Astrocyte of the cerebellum (primary cell): ENCODE measurements at regions of chr17 and their contacts with region 1.

Region 1: GRCh38 chr17:38617011-38617867 is 11.5 kb upstream of the SRCIN1 start:
- DNase-seq: no peak
- H3K4me3 ChIP-seq: no peak overlapping the region
- CTCF ChIP-seq: no peak

Region 2: DNA sequence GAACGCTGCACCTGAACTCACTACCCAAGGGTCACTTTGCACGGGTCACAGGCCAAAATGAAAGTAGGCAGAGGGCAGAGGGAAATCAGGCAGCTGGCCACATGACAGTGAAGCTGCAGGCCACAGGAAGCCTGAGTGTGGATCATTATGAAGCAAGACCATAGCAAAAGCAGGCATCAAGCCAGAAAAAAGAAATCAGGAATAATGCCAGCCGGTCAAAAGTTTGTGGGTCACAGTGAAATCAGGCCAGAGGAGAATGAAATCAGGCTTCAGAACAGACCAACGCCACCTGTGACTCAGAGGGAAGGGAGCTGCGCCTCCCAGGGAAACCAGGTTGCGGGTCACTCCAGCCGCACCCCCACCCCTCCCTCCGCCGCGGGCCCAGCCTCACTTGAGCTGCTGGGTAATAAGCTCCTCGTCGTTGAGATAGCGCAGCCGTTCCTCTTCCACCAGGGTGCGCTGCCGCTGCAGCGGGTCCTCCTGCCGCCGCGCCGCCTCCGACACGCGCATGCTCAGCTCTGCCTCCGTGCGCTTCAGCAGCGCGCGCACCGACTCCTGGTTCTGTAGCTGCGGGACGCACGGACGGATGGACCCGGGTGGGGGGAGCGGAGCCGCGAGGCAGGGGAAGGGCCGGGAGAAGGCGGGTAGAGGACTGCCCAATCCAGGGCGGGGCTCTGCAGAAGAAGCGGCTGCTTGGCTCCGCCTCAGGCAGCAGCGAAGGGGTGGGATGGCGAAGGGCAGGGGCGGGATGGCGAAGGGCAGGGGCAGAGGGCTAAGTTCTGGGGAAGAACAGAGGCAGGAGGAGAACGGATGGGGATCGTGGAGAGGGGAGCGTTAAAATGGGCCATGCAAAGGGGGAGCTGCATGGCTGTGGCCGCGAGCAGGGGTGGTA is 59.2 kb before region 1 on chr17:
- in situ Hi-C with region 1: no loop called
- DNase-seq: peak; percentile 68
- H3K4me3 ChIP-seq: peak overlapping the region; percentile 37
- CTCF ChIP-seq: peak; percentile 95

Region 3: GRCh38 chr17:38667099-38667786 is 50.0 kb after region 1 on chr17:
- in situ Hi-C with region 1: loop called (anchors 5 kb)
- DNase-seq: peak; percentile 47
- H3K4me3 ChIP-seq: no peak overlapping the region
- CTCF ChIP-seq: peak; percentile 100